GM12878 (cell line): ENCODE measurements at regions of chr2 and their contacts with region 1.

Region 1: GRCh38 chr2:202588647-202589581 is 45.9 kb upstream of the FAM117B start:
- DNase-seq: peak; percentile 35
- ATAC-seq: peak; percentile 99
- H3K4me3 ChIP-seq: no peak overlapping the region
- H3K27ac ChIP-seq: no peak overlapping the region
- H3K4me1 ChIP-seq: peaks cover 3% of the 10 kb centered on the region
- H3K27me3 ChIP-seq: no peaks in the 10 kb centered on the region
- CTCF ChIP-seq: peak; percentile 90 to 92 (median 90)
- EP300 ChIP-seq: peak in 1 of 2 experiments; percentile 29; a peak in 1 of 4 replicates
- POLR2A ChIP-seq: no peak
- RAD21 ChIP-seq: peak; percentile 94

Region 2: DNA sequence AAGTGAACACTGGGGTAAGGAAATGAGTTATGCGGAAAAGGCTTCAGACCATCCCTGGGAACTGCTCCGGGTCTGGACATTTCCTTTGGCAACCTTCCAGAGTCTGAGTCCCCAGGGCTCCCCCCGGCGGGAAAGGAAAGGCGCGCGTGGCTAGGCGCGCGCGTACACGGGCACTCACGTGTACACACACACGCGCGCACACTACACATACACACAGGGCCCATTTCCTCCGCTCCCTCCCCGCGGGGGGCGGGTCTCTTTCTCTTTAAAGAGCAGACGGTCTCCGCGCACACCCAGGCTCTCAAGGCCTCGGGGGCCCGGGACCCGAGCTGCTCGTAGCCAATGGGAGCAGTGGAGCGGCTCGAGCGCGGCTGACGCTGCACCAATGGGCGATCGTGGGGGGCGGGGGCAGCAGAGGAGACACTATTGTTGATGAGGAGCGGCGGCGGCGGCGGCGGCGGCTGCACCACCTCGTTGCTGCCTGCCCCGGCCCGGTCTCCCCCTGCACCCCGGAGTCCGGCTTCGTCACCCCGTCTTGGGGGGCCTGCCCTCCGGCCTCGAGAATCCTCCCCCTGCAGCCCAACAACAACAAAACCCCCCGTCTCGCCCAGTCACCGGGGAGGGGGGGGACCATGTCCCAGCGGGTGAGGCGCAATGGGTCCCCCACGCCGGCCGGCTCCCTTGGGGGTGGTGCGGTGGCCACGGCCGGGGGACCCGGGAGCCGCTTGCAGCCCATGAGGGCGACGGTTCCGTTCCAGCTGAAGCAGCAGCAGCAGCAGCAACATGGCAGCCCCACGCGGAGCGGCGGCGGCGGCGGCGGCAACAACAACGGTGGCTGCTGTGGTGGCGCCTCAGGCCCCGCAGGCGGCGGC is 45.9 kb after region 1 on chr2 and contains the start of gene FAM117B:
- CTCF ChIA-PET with region 1: interaction called, 17 read pairs
- POLR2A ChIA-PET with region 1: no interaction called
- RAD21 ChIA-PET with region 1: interaction called, 14 read pairs
- SMC1A ChIA-PET with region 1: interaction called, 23 read pairs
- in situ Hi-C with region 1: no loop called
- intact Hi-C with region 1: loop called (anchors 1 kb)
- DNase-seq: peak; percentile 84
- ATAC-seq: peak; percentile 96
- H3K4me3 ChIP-seq: peak within 1 kb of the TSS; percentile 98
- H3K27ac ChIP-seq: peak within 1 kb of the TSS; percentile 78
- H3K4me1 ChIP-seq: 0 out of 2 replicates have a peak, but pooled peaks cover 4% of the 10 kb centered on the region
- H3K27me3 ChIP-seq: no peaks in the 10 kb centered on the region
- CTCF ChIP-seq: peak in 2 of 3 experiments; percentile 14 to 16; a peak in 1 of 6 replicates
- EP300 ChIP-seq: peak; percentile 8 to 29; a peak in 2 of 4 replicates
- POLR2A ChIP-seq: peak; percentile 86
- RAD21 ChIP-seq: 0 out of 2 replicates have a peak, but pooled peaks have one; percentile 1
- polyA plus RNA-seq, gene FAM117B: 1.6 to 4.1 TPM

Region 3: GRCh38 chr2:202700075-202700901 is 111.4 kb after region 1 on chr2:
- CTCF ChIA-PET with region 1: interaction called, 23 read pairs
- POLR2A ChIA-PET with region 1: no interaction called
- RAD21 ChIA-PET with region 1: interaction called, 16 read pairs
- SMC1A ChIA-PET with region 1: interaction called, 16 read pairs
- in situ Hi-C with region 1: no loop called
- intact Hi-C with region 1: no loop called
- DNase-seq: no peak
- ATAC-seq: no peak
- H3K4me3 ChIP-seq: no peak overlapping the region
- H3K27ac ChIP-seq: no peak overlapping the region
- H3K4me1 ChIP-seq: no peaks in the 10 kb centered on the region
- H3K27me3 ChIP-seq: no peaks in the 10 kb centered on the region
- CTCF ChIP-seq: no peak; a peak in 1 of 6 replicates
- EP300 ChIP-seq: no peak
- POLR2A ChIP-seq: no peak
- RAD21 ChIP-seq: peak; percentile 10; the same call in 1 of the 2 replicates

Region 4: DNA sequence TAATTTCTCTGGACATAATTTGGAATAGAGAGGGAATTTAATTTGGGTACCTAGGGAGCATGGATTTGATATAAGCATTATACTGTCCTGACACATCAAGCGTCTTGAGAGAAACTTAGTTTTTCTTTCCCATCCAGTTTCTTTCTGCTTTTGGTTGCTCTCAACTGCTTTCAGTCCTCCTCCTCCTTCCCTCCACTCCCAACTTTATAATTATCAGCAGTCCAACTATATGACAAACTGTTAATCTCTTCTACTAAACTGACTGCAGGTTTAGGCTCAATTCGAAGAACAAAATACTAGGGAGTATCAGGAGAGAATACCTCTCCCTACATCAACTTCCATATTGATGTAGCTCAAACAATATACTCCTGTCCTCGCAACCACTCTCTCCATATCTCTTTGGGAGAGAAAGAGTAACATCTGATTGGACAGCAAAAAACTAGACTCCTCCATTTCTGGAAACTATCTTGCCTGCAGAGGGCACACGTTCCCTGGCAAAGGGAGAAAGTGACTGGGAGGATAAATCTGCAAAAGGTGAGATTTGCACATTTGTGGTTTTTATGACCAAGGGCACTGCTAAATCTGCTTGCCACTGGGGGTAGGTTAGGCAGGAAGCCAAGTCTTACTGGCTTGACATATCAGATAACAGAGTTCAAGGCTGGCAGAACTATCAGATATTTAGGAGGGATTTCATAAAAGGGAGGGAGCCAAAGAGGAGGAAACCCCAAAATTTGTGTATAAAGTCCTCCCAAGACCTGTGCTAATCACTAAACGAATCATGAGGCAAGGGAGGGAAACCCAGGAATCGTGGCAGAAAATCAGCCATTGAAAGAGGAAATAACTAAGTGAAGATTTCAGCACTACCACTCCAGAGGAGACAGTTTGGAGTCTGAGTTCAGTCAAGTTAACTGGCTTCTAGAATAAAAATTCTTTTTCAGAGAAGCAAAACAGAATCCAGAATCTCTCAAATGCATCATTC is 242.6 kb after region 1 on chr2:
- CTCF ChIA-PET with region 1: interaction called, 5 read pairs
- POLR2A ChIA-PET with region 1: no interaction called
- RAD21 ChIA-PET with region 1: no interaction called
- SMC1A ChIA-PET with region 1: interaction called, 7 read pairs
- in situ Hi-C with region 1: no loop called
- intact Hi-C with region 1: loop called (anchors 1 kb)
- DNase-seq: peak; percentile 61
- ATAC-seq: peak; percentile 97
- H3K4me3 ChIP-seq: no peak overlapping the region
- H3K27ac ChIP-seq: no peak overlapping the region
- H3K4me1 ChIP-seq: peaks cover 5% of the 10 kb centered on the region; the same call in 1 of the 2 replicates
- H3K27me3 ChIP-seq: no peaks in the 10 kb centered on the region
- CTCF ChIP-seq: peak; percentile 70 to 84 (median 71)
- EP300 ChIP-seq: no peak
- POLR2A ChIP-seq: no peak
- RAD21 ChIP-seq: peak; percentile 90

Region 5: DNA sequence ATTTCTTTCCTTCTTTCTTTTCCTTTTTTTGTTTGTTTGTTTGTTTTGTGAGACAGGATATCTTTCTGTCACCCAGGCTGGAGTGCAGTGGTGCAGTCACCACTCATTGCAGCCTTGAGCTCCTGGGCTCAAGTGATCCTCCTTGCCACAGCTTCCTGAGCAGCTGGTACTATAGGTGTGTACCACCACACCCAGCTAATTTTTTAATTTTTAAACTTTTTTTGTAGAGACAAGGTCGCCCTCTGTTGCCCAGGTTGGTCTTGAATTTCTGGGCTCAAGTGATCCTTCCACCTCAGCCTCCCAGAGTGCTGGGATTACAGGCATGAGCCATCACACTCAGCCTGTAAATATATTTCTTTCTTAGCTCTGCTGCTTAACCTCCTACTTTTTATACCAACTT is 566.5 kb after region 1 on chr2:
- CTCF ChIA-PET with region 1: interaction called, 11 read pairs
- POLR2A ChIA-PET with region 1: no interaction called
- RAD21 ChIA-PET with region 1: no interaction called
- SMC1A ChIA-PET with region 1: no interaction called
- in situ Hi-C with region 1: no loop called
- intact Hi-C with region 1: no loop called
- DNase-seq: no peak
- ATAC-seq: peak; percentile 54
- H3K4me3 ChIP-seq: no peak overlapping the region
- H3K27ac ChIP-seq: no peak overlapping the region
- H3K4me1 ChIP-seq: no peaks in the 10 kb centered on the region
- H3K27me3 ChIP-seq: no peaks in the 10 kb centered on the region
- CTCF ChIP-seq: peak in 1 of 3 experiments; percentile 6; a peak in 1 of 6 replicates
- EP300 ChIP-seq: no peak
- POLR2A ChIP-seq: no peak
- RAD21 ChIP-seq: 0 out of 2 replicates have a peak, but pooled peaks have one; percentile 24